ENCODE measurements at regions of chr14 and their contacts with region 1.

Region 1: GRCh38 chr14:58297762-58298476 is 436 bp upstream of the ARID4A start:
- DNase-seq: peak; percentile 99
- H3K4me3 Mint-ChIP-seq: no peak overlapping the region
- H3K27ac Mint-ChIP-seq: no peak overlapping the region
- H3K4me1 Mint-ChIP-seq: peaks cover 35% of the 10 kb centered on the region
- H3K27me3 Mint-ChIP-seq: no peaks in the 10 kb centered on the region

Region 2: GRCh38 chr14:57268161-57269069 is 1029.5 kb before region 1 on chr14 and contains the starts of genes AP5M1 and EXOC5:
- CTCF ChIA-PET with region 1: no interaction called
- POLR2A ChIA-PET with region 1: no interaction called
- intact Hi-C with region 1: loop called (anchors 5 kb)
- DNase-seq: peak; percentile 96
- H3K4me3 Mint-ChIP-seq: peak within 1 kb of the TSS; percentile 99
- H3K27ac Mint-ChIP-seq: peak within 1 kb of the TSS; percentile 99
- H3K4me1 Mint-ChIP-seq: peaks cover 48% of the 10 kb centered on the region
- H3K27me3 Mint-ChIP-seq: no peaks in the 10 kb centered on the region
- total RNA-seq, gene AP5M1: 27.7 to 31.1 TPM
- total RNA-seq, gene EXOC5: 82.1 to 82.6 TPM

Region 3: DNA sequence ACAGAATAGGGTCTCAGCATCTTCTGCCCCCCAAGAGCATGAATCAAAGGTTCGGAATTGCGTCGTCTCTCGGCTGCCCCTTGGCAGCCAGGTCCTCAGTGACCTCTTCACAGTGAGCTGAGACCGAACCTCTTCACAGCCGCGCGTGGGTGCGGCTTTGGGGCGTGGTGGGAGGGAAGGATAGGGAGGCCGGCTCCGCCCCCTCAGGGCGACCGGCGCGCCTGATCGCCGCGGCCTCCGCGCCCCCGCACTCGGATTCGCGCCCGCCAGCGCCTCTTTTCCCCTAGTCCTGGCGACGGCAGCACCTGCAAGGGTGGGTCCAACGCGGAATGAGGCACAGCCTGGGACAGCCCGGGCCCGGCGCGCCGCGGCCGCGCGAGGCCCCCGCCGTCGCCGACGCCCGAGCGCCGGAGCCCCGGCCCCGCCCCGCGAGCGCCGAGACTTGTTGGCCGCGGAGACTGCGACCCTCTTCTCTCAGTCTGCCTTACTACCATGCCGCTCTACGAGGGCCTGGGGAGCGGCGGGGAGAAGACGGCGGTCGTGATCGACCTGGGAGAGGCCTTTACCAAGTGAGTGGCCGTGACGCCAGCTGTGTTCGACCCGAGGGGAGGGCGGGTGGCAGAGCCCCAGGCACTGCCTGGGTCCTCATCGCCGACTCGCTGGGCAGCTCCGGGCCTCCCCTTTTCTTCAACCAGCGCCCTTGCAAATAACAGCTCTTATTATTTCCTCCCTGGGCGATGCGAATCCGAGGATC is 98.0 kb before region 1 on chr14 and contains the start of gene ACTR10:
- CTCF ChIA-PET with region 1: no interaction called
- POLR2A ChIA-PET with region 1: interaction called, 3 read pairs
- intact Hi-C with region 1: loop called (anchors 1 kb)
- DNase-seq: peak; percentile 93
- H3K4me3 Mint-ChIP-seq: peak within 1 kb of the TSS; percentile 95
- H3K27ac Mint-ChIP-seq: peak within 1 kb of the TSS; percentile 88
- H3K4me1 Mint-ChIP-seq: peaks cover 29% of the 10 kb centered on the region
- H3K27me3 Mint-ChIP-seq: no peaks in the 10 kb centered on the region
- total RNA-seq, gene ACTR10: 45.3 to 47.0 TPM

Region 4: DNA sequence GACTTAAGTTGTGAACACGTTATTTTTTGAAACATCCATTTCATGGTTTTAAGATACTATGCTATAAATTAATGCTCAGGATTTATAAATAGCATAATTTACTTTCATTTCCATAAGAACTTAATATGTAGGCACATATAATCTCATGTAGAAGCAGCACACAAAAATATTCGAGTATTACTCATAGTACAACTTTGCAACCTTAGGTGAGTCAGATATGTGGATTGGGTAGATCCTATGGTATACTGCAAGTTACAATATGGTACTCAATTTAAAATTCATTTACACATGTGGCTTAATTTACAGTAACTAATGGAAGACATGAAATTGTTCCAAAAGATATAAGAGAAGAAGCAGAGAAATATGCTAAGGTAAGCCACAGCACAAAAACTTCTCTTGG is 27.3 kb before region 1 on chr14:
- CTCF ChIA-PET with region 1: interaction called, 4 read pairs
- POLR2A ChIA-PET with region 1: interaction called, 10 read pairs
- intact Hi-C with region 1: loop called (anchors 1 kb)
- DNase-seq: no peak
- H3K4me3 Mint-ChIP-seq: no peak overlapping the region
- H3K27ac Mint-ChIP-seq: peak overlapping the region; percentile 72
- H3K4me1 Mint-ChIP-seq: peaks cover 38% of the 10 kb centered on the region
- H3K27me3 Mint-ChIP-seq: no peaks in the 10 kb centered on the region

Region 5: GRCh38 chr14:58331111-58331510 is 33.2 kb after region 1 on chr14:
- CTCF ChIA-PET with region 1: no interaction called
- POLR2A ChIA-PET with region 1: interaction called, 3 read pairs
- intact Hi-C with region 1: loop called (anchors 1 kb)
- DNase-seq: peak; percentile 88
- H3K4me3 Mint-ChIP-seq: peak overlapping the region; percentile 62
- H3K27ac Mint-ChIP-seq: peak overlapping the region; percentile 89
- H3K4me1 Mint-ChIP-seq: peaks cover 13% of the 10 kb centered on the region
- H3K27me3 Mint-ChIP-seq: no peaks in the 10 kb centered on the region

Region 6: GRCh38 chr14:60091550-60092530 is 1793.9 kb after region 1 on chr14 and contains the start of gene PCNX4:
- CTCF ChIA-PET with region 1: no interaction called
- POLR2A ChIA-PET with region 1: no interaction called
- intact Hi-C with region 1: loop called (anchors 10 kb)
- DNase-seq: peak; percentile 95
- H3K4me3 Mint-ChIP-seq: peak within 1 kb of the TSS; percentile 95
- H3K27ac Mint-ChIP-seq: peak within 1 kb of the TSS; percentile 91
- H3K4me1 Mint-ChIP-seq: peaks cover 30% of the 10 kb centered on the region
- H3K27me3 Mint-ChIP-seq: no peaks in the 10 kb centered on the region
- total RNA-seq, gene PCNX4: 26.3 to 26.9 TPM